ENCODE measurements at regions of chrX and their contacts with region 1.

Region 1: GRCh38 chrX:129754056-129755024 is 15.6 kb downstream of the XPNPEP2 start:
- DNase-seq: no peak
- ATAC-seq: no peak
- H3K4me3 Mint-ChIP-seq: peak overlapping the region; percentile 8
- H3K27ac Mint-ChIP-seq: peak overlapping the region; percentile 54
- H3K4me1 Mint-ChIP-seq: peaks cover 69% of the 10 kb centered on the region
- H3K27me3 Mint-ChIP-seq: no peaks in the 10 kb centered on the region

Region 2: DNA sequence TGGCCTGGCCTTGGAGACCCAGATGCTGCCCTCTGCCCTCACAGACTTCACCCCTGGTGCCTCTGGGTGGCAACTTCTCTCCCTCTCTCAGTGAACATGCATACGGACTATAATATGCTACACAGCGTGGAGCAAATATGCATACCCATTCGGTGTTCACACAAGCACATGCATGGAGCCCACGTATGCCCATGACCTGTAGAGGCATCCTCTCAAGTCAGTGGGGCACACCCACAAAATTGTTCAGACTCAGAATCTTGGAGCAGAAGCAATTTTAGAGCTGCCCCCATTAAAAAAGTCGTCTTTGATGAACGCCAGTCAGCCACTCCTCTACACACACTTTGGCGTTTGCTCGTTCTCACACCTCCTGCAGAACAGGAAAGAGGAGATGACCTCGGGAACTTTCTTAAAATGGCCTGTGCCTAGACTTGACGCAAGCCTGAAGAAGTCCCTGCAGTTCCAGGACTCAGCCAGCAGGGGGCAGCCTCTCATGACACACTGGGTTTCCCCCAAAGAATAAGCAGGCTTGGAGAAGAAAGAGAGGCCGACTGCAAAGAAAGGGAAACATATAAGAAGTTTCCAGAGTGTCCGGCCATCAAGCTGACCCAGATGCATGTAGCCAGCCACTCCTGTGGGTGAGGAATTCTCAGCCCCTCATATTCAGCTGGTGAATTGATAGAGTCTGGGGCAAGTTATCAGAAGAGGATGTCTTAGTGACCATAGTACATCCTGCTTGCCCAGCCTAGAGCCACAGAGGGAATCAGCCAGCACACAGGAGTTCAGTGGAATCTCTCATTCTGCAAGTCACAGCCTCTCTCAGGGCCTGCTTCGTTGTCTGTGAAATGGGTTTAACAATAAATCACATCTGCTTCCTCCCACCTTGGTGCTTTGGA is 116.9 kb before region 1 on chrX:
- CTCF ChIA-PET with region 1: interaction called, 15 read pairs
- POLR2A ChIA-PET with region 1: no interaction called
- DNase-seq: peak; percentile 78
- ATAC-seq: peak; percentile 86
- H3K4me3 Mint-ChIP-seq: no peak overlapping the region
- H3K27ac Mint-ChIP-seq: no peak overlapping the region
- H3K4me1 Mint-ChIP-seq: peaks cover 12% of the 10 kb centered on the region
- H3K27me3 Mint-ChIP-seq: peaks cover 3% of the 10 kb centered on the region

Region 3: GRCh38 chrX:129683551-129683950 is 70.8 kb before region 1 on chrX:
- CTCF ChIA-PET with region 1: no interaction called
- POLR2A ChIA-PET with region 1: no interaction called
- DNase-seq: no peak
- ATAC-seq: no peak
- H3K4me3 Mint-ChIP-seq: no peak overlapping the region
- H3K27ac Mint-ChIP-seq: no peak overlapping the region
- H3K4me1 Mint-ChIP-seq: peaks cover 7% of the 10 kb centered on the region
- H3K27me3 Mint-ChIP-seq: no peaks in the 10 kb centered on the region

Region 4: DNA sequence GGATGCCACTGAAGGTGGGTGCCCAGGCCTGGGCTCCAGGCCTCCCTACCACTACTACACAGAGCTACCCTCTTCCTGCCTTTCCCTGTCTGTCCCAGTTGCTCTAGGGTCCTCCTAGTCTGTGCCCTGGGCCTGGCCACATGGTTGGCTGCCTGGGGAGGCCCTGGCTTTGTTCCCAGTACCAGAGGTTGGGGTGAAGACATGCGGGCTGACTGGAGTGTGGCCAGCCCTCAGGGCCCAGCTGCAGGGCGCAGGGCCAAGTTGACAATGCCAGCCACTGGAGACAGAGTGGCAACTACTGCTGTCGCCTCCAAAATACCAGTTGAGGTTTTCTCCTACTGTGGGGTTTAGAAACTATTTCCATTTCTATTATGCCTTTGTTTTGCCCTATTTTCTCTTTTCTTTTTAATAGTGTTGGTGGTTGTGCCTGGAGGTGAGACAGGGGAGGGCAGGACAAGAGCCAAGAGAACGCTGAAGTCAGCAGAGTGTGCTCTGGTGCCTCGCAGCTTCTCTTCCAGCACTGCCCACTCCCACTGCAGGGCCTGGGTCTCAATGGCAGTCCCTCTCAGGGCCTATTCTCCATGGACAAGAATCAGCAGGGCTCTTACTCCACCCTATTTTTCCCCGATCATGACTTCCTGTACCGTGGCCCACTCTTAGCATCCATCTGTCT is 47.8 kb before region 1 on chrX:
- CTCF ChIA-PET with region 1: no interaction called
- POLR2A ChIA-PET with region 1: no interaction called
- DNase-seq: no peak
- ATAC-seq: no peak
- H3K4me3 Mint-ChIP-seq: no peak overlapping the region
- H3K27ac Mint-ChIP-seq: no peak overlapping the region
- H3K4me1 Mint-ChIP-seq: no peaks in the 10 kb centered on the region
- H3K27me3 Mint-ChIP-seq: peaks cover 6% of the 10 kb centered on the region

Region 5: GRCh38 chrX:129726307-129727111 is 27.8 kb before region 1 on chrX:
- CTCF ChIA-PET with region 1: interaction called, 23 read pairs
- POLR2A ChIA-PET with region 1: no interaction called
- DNase-seq: no peak
- ATAC-seq: no peak
- H3K4me3 Mint-ChIP-seq: no peak overlapping the region
- H3K27ac Mint-ChIP-seq: no peak overlapping the region
- H3K4me1 Mint-ChIP-seq: peaks cover 43% of the 10 kb centered on the region
- H3K27me3 Mint-ChIP-seq: no peaks in the 10 kb centered on the region

Region 6: GRCh38 chrX:129772796-129773431 is 18.6 kb after region 1 on chrX:
- CTCF ChIA-PET with region 1: interaction called, 19 read pairs
- POLR2A ChIA-PET with region 1: interaction called, 165 read pairs
- DNase-seq: peak; percentile 66
- ATAC-seq: peak; percentile 17
- H3K4me3 Mint-ChIP-seq: peak overlapping the region; percentile 49
- H3K27ac Mint-ChIP-seq: peak overlapping the region; percentile 95
- H3K4me1 Mint-ChIP-seq: peaks cover 82% of the 10 kb centered on the region
- H3K27me3 Mint-ChIP-seq: no peaks in the 10 kb centered on the region

Region 7: GRCh38 chrX:129798888-129799287 is 44.5 kb after region 1 on chrX:
- CTCF ChIA-PET with region 1: interaction called, 10 read pairs
- POLR2A ChIA-PET with region 1: interaction called, 6 read pairs
- DNase-seq: no peak
- ATAC-seq: no peak
- H3K4me3 Mint-ChIP-seq: no peak overlapping the region
- H3K27ac Mint-ChIP-seq: peak overlapping the region; percentile 72
- H3K4me1 Mint-ChIP-seq: peaks cover 22% of the 10 kb centered on the region
- H3K27me3 Mint-ChIP-seq: no peaks in the 10 kb centered on the region

Region 8: DNA sequence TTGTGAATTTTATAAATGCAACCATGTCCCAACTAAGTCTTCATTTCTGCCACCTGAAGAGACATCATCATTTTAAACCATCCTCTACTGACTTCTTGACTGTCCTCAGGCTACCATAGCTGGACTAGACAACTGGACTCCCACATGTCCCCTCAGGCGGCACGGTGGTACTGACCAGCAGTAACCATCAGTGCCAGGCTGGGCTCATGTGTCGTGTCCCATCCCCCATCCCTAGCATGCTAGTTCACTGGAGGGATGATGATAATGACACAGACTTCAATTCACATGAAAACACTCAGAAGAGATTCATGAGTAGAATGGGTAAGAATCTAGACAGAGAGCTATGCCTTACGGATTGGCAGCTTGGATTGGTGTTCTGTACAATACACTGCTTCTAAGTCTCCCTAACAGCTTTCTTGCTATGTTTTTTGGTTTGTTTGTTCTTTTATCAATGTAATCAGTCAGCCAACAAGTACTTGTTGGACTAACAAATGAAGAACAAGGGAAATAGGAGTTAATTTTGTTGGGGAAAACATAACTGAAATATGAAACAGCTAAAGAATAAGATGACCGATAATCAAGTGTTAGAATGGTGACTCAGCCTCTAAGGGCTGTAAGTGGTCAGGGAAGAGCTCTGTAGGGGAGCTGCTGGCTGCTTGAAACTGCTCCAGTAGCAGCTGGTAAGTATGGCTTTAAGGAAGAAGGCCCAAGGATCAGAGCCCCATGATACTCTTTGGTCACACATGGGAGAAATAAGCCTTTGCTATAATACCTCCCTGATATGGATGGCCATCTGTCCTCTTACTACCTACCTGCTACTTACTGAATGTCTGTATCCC is 79.0 kb after region 1 on chrX:
- CTCF ChIA-PET with region 1: no interaction called
- POLR2A ChIA-PET with region 1: no interaction called
- DNase-seq: no peak
- ATAC-seq: no peak
- H3K4me3 Mint-ChIP-seq: no peak overlapping the region
- H3K27ac Mint-ChIP-seq: no peak overlapping the region
- H3K4me1 Mint-ChIP-seq: no peaks in the 10 kb centered on the region
- H3K27me3 Mint-ChIP-seq: no peaks in the 10 kb centered on the region

Measured in activated CD8-positive, alpha-beta T cell treated with anti-CD3 and anti-CD28 coated beads, Interleukin-2, amount 10 ng/mL, durations not matched to agents 7 days and 5 days (primary cell).